ENCODE measurements at regions of chr11 and their contacts with region 1.

Region 1: GRCh38 chr11:17384002-17384511 is 4.4 kb downstream of the KCNJ11 start:
- DNase-seq: peak; percentile 78 to 83
- ATAC-seq: peak; percentile 23 to 60 (median 48)
- H3K4me3 ChIP-seq: no peak overlapping the region
- H3K27ac ChIP-seq: no peak overlapping the region
- H3K4me1 ChIP-seq: peaks cover 0 to 37% (median 8%) of the 10 kb centered on the region in 9 donors
- H3K27me3 ChIP-seq: peaks cover 0 to 15% (median 13%) of the 10 kb centered on the region in 7 donors
- CTCF ChIP-seq: peak; percentile 86 to 97 (median 93)

Region 2: GRCh38 chr11:17528181-17528691 is 144.2 kb after region 1 on chr11:
- intact Hi-C with region 1: loop called in 1 of 10 experiments (anchors 2 kb)
- DNase-seq: peak; percentile 47 to 49
- ATAC-seq: peak in 7 of 8 donors; percentile 66 to 85 (median 77)
- H3K4me3 ChIP-seq: no peak overlapping the region
- H3K27ac ChIP-seq: no peak overlapping the region
- H3K4me1 ChIP-seq: peaks cover 0 to 20% (median 0%) of the 10 kb centered on the region in 9 donors
- H3K27me3 ChIP-seq: peaks cover 0 to 9% (median 0%) of the 10 kb centered on the region in 7 donors
- CTCF ChIP-seq: peak; percentile 30 to 78 (median 72)